ENCODE measurements at regions of chr5 and their contacts with region 1.

Region 1: DNA sequence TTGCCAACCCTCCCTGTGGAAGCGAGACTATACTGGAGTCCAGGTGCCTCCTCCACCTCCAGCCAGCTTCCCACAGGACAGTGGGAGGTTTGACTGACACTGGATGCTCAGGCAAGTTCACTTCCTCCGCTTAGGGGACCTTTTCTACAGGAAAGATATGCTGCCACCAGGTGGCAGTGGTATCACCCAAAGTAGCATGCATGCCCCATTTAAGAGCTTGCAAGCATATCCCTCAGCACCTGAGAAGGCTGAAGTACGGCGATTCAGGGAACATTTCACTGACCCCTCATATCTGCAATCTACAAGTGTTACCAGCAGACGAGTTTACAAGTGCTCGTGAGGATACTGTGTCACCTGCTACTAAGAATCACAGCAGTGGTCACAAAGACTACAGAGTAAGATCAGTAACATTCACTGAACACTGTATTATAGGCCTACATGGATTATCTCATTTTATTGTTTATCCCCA is 75.5 kb downstream of the KLHL3 start:
- DNase-seq: peak; percentile 82
- H3K4me3 Mint-ChIP-seq: no peak overlapping the region
- H3K27ac Mint-ChIP-seq: no peak overlapping the region
- H3K4me1 Mint-ChIP-seq: peaks cover 23% of the 10 kb centered on the region
- H3K27me3 Mint-ChIP-seq: no peaks in the 10 kb centered on the region

Region 2: DNA sequence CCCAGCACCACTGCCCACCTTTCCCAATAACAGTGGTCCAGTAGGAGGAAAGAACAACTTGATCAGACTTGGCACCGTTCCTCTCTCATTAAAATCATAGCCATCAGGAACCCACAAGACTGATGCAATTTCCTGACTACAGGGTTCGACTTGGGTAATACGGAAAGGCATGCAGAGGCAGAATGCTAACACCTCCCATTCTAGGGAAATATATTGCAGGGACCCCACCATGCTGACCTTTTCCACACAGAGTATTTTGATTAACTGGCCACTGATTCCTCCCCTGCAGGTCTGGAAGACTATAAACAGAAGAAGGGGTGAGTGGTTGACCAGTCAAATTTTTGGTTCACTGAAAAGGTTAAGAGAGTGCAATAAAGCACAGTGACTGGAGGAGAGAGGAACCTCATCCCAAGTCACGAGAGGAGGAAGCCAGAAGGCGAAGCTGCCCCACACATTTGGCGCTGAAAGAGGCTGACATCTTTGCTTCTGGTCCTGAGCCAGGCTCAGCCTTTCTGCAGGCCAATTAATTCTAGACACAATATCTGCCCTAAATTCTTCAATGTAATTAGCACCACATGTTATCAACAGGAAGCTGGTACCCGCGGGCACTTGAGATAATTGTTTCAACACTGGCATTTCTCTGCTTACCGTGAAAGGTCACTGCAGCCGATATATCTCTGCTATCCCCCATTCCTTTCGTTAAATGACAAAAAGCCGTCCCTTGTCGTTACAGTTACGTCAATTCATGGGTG is 96.6 kb before region 1 on chr5:
- CTCF ChIA-PET with region 1: no interaction called
- POLR2A ChIA-PET with region 1: no interaction called
- DNase-seq: no peak
- H3K4me3 Mint-ChIP-seq: no peak overlapping the region
- H3K27ac Mint-ChIP-seq: peak overlapping the region; percentile 38
- H3K4me1 Mint-ChIP-seq: no peaks in the 10 kb centered on the region
- H3K27me3 Mint-ChIP-seq: peaks cover 11% of the 10 kb centered on the region

Region 3: DNA sequence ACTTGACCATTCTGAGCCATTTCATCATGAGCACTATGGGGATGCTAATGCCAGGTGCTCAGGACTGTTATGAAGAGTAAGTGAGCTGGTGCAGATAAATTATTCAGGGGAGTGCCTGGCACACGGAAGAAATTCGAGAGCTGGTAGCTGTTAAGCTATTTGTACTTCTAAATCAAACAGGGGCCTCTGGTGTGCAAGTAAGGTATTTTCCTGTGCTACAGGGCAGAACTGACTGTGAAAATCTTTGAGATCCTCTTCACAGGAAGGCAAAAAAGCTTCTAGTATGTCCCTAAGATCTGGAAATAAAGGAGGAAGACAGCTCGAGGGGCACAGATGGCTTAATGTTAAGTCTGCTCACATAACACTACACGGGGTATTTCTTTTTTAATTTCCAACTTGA is 55.0 kb before region 1 on chr5:
- CTCF ChIA-PET with region 1: no interaction called
- POLR2A ChIA-PET with region 1: no interaction called
- DNase-seq: no peak
- H3K4me3 Mint-ChIP-seq: no peak overlapping the region
- H3K27ac Mint-ChIP-seq: no peak overlapping the region
- H3K4me1 Mint-ChIP-seq: no peaks in the 10 kb centered on the region
- H3K27me3 Mint-ChIP-seq: peaks cover 37% of the 10 kb centered on the region

Region 4: GRCh38 chr5:137672019-137672418 is 11.6 kb after region 1 on chr5:
- CTCF ChIA-PET with region 1: interaction called, 10 read pairs
- POLR2A ChIA-PET with region 1: no interaction called
- DNase-seq: no peak
- H3K4me3 Mint-ChIP-seq: no peak overlapping the region
- H3K27ac Mint-ChIP-seq: no peak overlapping the region
- H3K4me1 Mint-ChIP-seq: peaks cover 10% of the 10 kb centered on the region
- H3K27me3 Mint-ChIP-seq: no peaks in the 10 kb centered on the region

Region 5: GRCh38 chr5:137754126-137754960 is 94.0 kb after region 1 on chr5 and contains the start of gene HNRNPA0:
- CTCF ChIA-PET with region 1: interaction called, 11 read pairs
- POLR2A ChIA-PET with region 1: no interaction called
- DNase-seq: peak; percentile 96
- H3K4me3 Mint-ChIP-seq: peak within 1 kb of the TSS; percentile 95
- H3K27ac Mint-ChIP-seq: peak within 1 kb of the TSS; percentile 100
- H3K4me1 Mint-ChIP-seq: peaks cover 27% of the 10 kb centered on the region
- H3K27me3 Mint-ChIP-seq: no peaks in the 10 kb centered on the region
- total RNA-seq, gene HNRNPA0: 26.0 to 31.8 TPM

Region 6: DNA sequence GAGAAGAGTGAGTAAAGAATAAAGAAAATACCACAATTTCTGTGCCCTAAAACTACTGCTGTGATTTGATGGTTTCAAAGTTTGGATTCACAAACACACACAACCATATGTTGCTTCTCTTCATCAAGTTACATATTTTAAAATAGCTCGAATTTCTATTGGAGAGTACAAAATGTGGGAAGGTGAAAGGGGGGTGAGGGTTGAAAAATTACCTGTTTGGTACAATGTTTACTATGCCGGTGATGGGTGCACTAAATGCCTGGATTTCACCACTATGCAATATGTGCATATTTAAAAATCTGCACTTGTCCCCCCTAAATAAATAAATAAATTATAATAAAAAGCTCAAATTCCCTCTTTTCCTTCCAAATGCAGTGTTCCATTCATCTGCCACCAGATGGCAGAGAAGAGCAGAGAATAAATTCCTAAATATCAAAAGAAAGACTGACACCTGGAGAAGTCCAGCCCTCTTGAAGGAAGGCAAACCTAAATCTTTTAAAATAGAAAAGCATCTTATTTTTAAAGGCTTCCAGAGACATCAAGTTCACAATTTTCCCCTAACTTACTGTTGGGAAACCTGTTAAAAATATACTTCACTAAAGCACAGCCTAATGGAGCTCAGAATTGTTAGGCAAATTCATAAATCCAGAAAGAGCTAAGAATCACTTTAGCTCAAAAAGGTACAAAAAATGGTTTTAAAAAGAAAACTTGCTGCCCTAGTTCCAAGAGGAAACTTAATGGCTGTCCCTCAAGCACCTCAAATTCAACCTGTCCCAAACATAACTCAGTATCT is 118.6 kb after region 1 on chr5:
- CTCF ChIA-PET with region 1: no interaction called
- POLR2A ChIA-PET with region 1: no interaction called
- DNase-seq: peak; percentile 12
- H3K4me3 Mint-ChIP-seq: no peak overlapping the region
- H3K27ac Mint-ChIP-seq: no peak overlapping the region
- H3K4me1 Mint-ChIP-seq: no peaks in the 10 kb centered on the region
- H3K27me3 Mint-ChIP-seq: peaks cover 4% of the 10 kb centered on the region